A549 (cell line): ENCODE measurements at regions of chr12 and their contacts with region 1.

Region 1: DNA sequence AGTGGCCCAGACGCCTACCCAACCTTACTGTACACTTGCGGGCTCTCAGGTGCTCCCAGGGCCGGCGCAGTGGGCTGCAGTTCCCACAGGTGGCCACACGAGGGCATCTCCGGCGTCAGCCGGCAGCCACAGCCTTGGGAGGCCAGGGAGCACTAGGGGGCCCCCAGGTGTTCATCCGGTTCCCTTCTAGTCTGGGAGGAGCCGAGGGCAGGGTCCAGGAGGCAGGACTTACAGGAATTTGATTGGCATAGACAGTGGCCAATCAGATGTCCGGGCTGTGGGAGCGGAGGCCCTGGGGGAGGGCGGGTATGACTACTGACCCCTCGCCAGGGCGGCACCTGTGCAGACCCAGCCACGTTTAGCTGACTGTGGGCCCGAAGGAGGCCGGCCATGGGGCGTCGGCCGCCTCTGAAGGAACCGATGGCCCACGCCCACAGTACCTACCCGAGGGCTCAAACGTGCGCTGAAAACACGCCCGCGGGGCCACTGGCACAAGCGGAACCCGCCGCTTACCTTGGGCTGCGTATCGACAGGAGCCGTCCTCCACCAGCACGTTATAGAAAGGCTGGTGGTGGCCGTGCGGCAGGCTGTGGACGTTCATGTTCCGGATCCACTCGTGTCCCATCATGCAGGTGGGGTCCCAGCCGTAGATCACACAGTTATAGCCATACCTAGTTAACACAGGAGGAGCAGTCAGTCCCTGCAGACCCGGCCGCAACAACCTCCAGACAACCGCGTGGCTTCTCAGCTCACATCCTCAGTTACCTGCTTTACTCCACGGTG is 34.8 kb downstream of the FBXO21 start:
- DNase-seq: peak; percentile 73 to 95
- ATAC-seq: peak; percentile 73 to 84
- H3K4me3 ChIP-seq: no peak overlapping the region
- H3K27ac ChIP-seq: peak overlapping the region in 1 of 2 experiments; percentile 70; a peak in 3 of 6 replicates
- H3K4me1 ChIP-seq: peaks cover 39% of the 10 kb centered on the region
- CTCF ChIP-seq: peak; percentile 83
- EP300 ChIP-seq: no peak
- POLR2A ChIP-seq: no peak
- RAD21 ChIP-seq: peak; percentile 42 to 61

Region 2: DNA sequence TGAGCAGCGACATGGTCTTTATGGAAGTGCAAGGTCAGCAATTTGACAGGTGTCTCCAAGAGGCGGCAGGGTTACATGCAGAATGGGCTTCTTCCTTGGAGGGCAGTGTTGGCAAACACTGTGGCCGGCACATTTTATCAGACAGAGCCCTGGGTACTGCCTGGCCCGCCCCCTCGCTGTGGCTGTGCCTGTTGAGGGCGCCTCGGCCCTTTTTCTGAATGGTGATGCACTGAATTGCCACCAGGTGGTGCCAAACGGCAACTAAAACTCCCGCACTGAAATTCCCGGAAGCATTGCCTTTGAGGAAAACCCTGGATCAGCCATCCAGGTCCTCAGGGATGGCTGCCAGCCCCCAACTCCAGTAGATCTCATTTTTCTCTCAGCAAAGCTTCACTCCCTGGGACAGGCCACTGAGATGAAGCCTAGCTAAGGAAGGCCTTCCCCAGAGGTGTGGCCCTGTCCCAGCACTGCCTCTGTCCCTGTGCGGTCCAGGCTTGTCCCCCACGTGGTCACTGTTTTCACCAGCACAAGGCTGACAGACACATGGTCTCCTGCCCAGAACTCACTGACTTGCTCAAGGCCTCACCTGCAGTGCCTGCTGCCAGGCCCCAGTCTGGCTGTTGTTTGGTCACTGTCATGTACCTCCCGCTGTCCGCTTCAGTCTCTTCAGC is 129.9 kb before region 1 on chr12:
- CTCF ChIA-PET with region 1: interaction called, 30 read pairs
- POLR2A ChIA-PET with region 1: no interaction called
- DNase-seq: peak; percentile 79
- ATAC-seq: peak; percentile 78 to 91
- H3K4me3 ChIP-seq: no peak overlapping the region
- H3K27ac ChIP-seq: peak overlapping the region; percentile 72 to 86
- H3K4me1 ChIP-seq: peaks cover 13% of the 10 kb centered on the region
- CTCF ChIP-seq: peak; percentile 92
- EP300 ChIP-seq: no peak
- POLR2A ChIP-seq: no peak
- RAD21 ChIP-seq: peak; percentile 91 to 94

Region 3: DNA sequence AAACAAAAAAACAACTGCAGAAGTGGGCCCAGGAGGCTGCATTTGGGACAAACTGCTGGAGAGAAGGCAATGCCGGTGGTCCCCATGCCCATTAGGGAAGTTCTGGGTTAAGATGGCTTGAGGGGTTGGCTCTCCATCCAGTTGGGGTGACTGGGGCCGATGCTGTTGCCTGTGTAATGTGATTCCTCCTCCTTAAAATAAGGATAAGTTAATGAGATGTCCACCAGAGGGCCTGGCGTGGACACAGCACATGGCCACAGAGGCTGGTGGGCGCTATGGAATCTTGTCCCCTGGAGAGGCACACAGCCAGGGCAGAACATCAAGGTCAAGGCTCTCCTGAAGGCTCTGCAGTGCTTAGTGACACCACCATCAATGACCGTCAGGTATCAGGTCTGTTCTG is 55.2 kb before region 1 on chr12:
- CTCF ChIA-PET with region 1: interaction called, 11 read pairs
- POLR2A ChIA-PET with region 1: no interaction called
- DNase-seq: peak; percentile 63 to 73
- ATAC-seq: peak; percentile 73 to 78
- H3K4me3 ChIP-seq: no peak overlapping the region
- H3K27ac ChIP-seq: peak overlapping the region; percentile 41 to 94; a peak in 4 of 6 replicates
- H3K4me1 ChIP-seq: peaks cover 26% of the 10 kb centered on the region; the same call in 2 of the 3 replicates
- CTCF ChIP-seq: peak; percentile 41; the same call in 2 of the 3 replicates
- EP300 ChIP-seq: no peak
- POLR2A ChIP-seq: no peak
- RAD21 ChIP-seq: peak; percentile 14 to 29; a peak in 2 of 5 replicates

Region 4: GRCh38 chr12:117130801-117131200 is 24.7 kb before region 1 on chr12:
- CTCF ChIA-PET with region 1: interaction called, 12 read pairs
- POLR2A ChIA-PET with region 1: no interaction called
- DNase-seq: no peak
- ATAC-seq: peak; percentile 35 to 47; a peak in 3 of 6 replicates
- H3K4me3 ChIP-seq: no peak overlapping the region
- H3K27ac ChIP-seq: peak overlapping the region; percentile 41 to 81; a peak in 5 of 6 replicates
- H3K4me1 ChIP-seq: peaks cover 28% of the 10 kb centered on the region
- CTCF ChIP-seq: no peak
- EP300 ChIP-seq: no peak
- POLR2A ChIP-seq: no peak
- RAD21 ChIP-seq: no peak

Region 5: GRCh38 chr12:117140397-117141096 is 14.9 kb before region 1 on chr12:
- CTCF ChIA-PET with region 1: interaction called, 12 read pairs
- POLR2A ChIA-PET with region 1: interaction called, 7 read pairs
- DNase-seq: peak; percentile 56 to 95
- ATAC-seq: peak; percentile 55 to 75
- H3K4me3 ChIP-seq: no peak overlapping the region
- H3K27ac ChIP-seq: peak overlapping the region; percentile 92 to 97
- H3K4me1 ChIP-seq: peaks cover 71% of the 10 kb centered on the region
- CTCF ChIP-seq: no peak
- EP300 ChIP-seq: peak; percentile 84 to 90; a peak in 3 of 5 replicates
- POLR2A ChIP-seq: no peak
- RAD21 ChIP-seq: no peak

Region 6: DNA sequence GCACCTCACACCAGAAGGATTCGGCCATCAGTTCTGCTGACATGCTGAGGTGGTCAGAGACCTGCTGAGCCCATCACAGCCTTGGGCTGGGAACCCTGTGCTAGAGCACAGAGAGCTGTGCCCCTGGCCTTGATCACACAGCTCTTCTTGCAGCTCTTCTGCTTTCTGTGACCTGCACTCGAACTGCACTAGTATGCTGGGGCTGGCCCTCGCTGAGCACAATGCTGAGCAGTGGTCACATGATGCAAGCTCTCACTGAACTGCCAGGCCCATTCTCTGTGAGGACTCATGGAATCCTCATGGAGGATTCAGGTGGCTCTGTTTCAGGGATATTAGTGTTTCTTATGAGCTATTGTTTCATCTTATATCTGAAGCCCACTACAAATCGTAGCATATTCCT is 12.3 kb after region 1 on chr12:
- CTCF ChIA-PET with region 1: interaction called, 20 read pairs
- POLR2A ChIA-PET with region 1: no interaction called
- DNase-seq: no peak
- ATAC-seq: no peak
- H3K4me3 ChIP-seq: no peak overlapping the region
- H3K27ac ChIP-seq: no peak overlapping the region
- H3K4me1 ChIP-seq: peaks cover 9% of the 10 kb centered on the region
- CTCF ChIP-seq: no peak
- EP300 ChIP-seq: no peak
- POLR2A ChIP-seq: no peak
- RAD21 ChIP-seq: no peak

Region 7: GRCh38 chr12:117218149-117218548 is 62.7 kb after region 1 on chr12:
- CTCF ChIA-PET with region 1: no interaction called
- POLR2A ChIA-PET with region 1: no interaction called
- DNase-seq: no peak
- ATAC-seq: no peak
- H3K4me3 ChIP-seq: no peak overlapping the region
- H3K27ac ChIP-seq: no peak overlapping the region
- H3K4me1 ChIP-seq: 0 out of 3 replicates have a peak, but pooled peaks cover 3% of the 10 kb centered on the region
- CTCF ChIP-seq: no peak
- EP300 ChIP-seq: no peak
- POLR2A ChIP-seq: no peak
- RAD21 ChIP-seq: no peak

Region 8: GRCh38 chr12:117394491-117394890 is 239.0 kb after region 1 on chr12:
- CTCF ChIA-PET with region 1: no interaction called
- POLR2A ChIA-PET with region 1: no interaction called
- DNase-seq: no peak
- ATAC-seq: no peak
- H3K4me3 ChIP-seq: no peak overlapping the region
- H3K27ac ChIP-seq: no peak overlapping the region
- H3K4me1 ChIP-seq: no peaks in the 10 kb centered on the region
- CTCF ChIP-seq: no peak
- EP300 ChIP-seq: no peak
- POLR2A ChIP-seq: no peak
- RAD21 ChIP-seq: no peak